ENCODE measurements at regions of chr3 and their contacts with region 1.

Region 1: DNA sequence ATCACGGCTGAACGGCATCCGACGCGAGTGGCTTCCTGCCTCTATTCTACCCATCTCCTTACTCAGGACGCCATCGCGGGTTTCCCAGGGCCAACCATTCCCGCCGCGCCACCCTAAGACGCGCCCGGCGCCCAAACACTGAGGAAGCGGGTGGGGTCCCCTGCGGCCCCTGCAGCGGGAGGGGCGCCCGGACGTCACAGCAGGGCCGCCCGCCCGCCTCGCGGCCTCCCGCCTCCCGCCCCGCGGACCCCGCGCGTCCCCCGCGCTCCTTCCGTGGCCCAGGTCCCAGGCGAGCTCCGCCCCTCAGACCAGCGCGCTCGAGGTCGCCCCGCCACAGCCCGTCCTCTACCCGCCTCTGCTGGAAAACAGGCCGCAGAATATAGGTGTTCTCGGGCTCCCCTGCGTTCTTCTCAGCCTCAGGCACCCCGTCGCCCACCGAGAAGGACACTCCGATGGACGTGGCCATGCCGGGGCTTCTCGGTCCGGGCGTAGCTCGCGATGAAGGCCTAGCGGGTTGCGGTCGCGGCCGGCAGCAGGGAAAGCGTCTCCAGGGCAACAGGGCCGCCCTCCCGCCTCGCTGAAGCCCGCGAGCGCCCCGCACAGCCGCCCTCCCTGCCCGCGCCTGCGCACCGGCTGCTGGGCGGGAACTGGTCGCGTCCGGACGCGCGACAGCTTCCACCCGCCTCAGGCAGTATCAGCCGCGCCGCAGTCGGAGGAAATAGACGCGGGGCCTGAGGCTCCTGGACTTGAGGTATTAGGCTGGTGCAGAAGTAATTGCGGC is at the start of gene DYNLT2B:
- DNase-seq: peak; percentile 80 to 98 (median 88)

Region 2: GRCh38 chr3:196432137-196432879 is 114.4 kb after region 1 on chr3 and contains the start of gene UBXN7:
- intact Hi-C with region 1: loop called (anchors 2 kb)
- DNase-seq: peak; percentile 91 to 99 (median 94)

Region 3: GRCh38 chr3:197238842-197239241 is 921.0 kb after region 1 on chr3:
- intact Hi-C with region 1: no loop called
- DNase-seq: no peak

Measured in posterior cingulate gyrus (tissue), 11 donors.